Activated naive CD4-positive, alpha-beta T cell treated with anti-CD3 and anti-CD28 coated beads for 36 hours (primary cell): ENCODE measurements at regions of chr1 and their contacts with region 1.

Region 1: GRCh38 chr1:167599957-167600581 is 30.0 kb upstream of the RCSD1 start:
- DNase-seq: peak; percentile 71
- H3K4me3 Mint-ChIP-seq: peak overlapping the region; percentile 45
- H3K27ac Mint-ChIP-seq: peak overlapping the region; percentile 67
- H3K4me1 Mint-ChIP-seq: peaks cover 39% of the 10 kb centered on the region
- H3K27me3 Mint-ChIP-seq: no peaks in the 10 kb centered on the region

Region 2: GRCh38 chr1:167617153-167618147 is 17.4 kb after region 1 on chr1:
- CTCF ChIA-PET with region 1: interaction called, 16 read pairs
- intact Hi-C with region 1: loop called (anchors 1 kb)
- DNase-seq: peak; percentile 46
- H3K4me3 Mint-ChIP-seq: peak overlapping the region; percentile 70
- H3K27ac Mint-ChIP-seq: peak overlapping the region; percentile 90
- H3K4me1 Mint-ChIP-seq: peaks cover 48% of the 10 kb centered on the region
- H3K27me3 Mint-ChIP-seq: no peaks in the 10 kb centered on the region

Region 3: DNA sequence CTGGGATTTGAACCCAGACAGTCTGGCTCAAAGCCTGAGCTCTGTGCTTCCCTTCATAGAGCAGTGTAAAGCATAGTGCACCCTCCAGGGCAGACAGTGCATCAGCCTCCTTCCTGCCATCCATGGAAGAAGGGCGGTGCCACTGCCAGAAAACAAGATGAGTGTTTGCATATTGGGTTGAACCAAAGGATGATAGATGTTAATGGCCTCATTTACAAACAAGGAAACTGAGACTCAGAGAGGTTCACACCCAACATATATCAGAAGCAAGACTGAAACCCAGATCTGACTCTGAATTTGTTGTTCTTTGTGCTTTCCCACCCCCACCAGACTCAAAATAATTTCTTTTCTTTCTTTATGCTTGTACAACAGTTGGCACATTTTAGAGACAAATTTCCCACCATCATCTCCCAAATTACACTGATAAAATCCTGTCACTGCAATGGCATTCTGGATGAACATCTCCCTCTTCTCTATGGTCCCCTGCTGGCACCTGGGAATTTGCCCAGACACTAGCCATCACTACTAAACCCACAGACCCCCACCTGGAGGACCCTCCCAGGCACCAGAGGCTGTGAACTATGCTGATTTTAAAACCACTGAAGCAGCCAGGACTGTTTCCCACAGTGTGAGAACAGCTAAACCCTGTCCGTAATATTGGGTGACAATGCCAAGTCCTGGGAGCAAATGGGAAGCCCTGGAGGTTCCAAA is 76.3 kb after region 1 on chr1:
- CTCF ChIA-PET with region 1: interaction called, 19 read pairs
- intact Hi-C with region 1: loop called (anchors 1 kb)
- DNase-seq: peak; percentile 70
- H3K4me3 Mint-ChIP-seq: no peak overlapping the region
- H3K27ac Mint-ChIP-seq: peak overlapping the region; percentile 42
- H3K4me1 Mint-ChIP-seq: peaks cover 35% of the 10 kb centered on the region
- H3K27me3 Mint-ChIP-seq: no peaks in the 10 kb centered on the region

Region 4: DNA sequence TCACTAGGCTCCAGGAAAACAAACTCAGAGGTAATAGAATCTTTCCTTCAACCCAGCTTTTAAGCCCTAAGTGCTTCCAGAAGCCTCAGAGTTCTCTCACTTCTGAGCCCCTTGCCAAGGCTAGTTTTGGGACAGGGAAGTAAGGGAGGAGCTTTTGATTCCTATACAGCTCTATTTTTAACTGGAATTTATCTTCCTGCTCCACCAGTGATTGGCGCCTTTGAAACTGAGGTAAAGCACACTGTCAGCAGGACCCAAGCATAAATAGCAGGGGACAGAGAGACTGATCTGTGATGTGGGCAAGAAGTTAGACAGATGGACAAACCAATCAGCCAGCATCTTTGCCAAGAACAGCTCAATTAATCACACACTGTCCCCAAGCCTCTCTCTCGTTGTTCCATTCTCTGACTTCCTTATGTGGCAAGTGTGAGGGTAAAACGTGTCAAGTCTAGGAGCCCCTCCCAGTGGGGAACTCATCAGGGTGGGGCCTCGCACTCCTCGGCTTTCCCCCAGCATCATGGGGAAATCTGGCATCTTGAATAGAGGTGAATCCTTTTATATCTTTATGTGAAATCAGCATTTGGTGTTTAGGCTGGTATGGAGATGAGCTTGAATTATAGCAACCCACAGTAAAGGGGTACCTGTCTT is 81.5 kb after region 1 on chr1:
- CTCF ChIA-PET with region 1: interaction called, 148 read pairs
- intact Hi-C with region 1: loop called (anchors 1 kb)
- DNase-seq: peak; percentile 53
- H3K4me3 Mint-ChIP-seq: no peak overlapping the region
- H3K27ac Mint-ChIP-seq: peak overlapping the region; percentile 59
- H3K4me1 Mint-ChIP-seq: peaks cover 10% of the 10 kb centered on the region
- H3K27me3 Mint-ChIP-seq: no peaks in the 10 kb centered on the region

Region 5: GRCh38 chr1:167715157-167715999 is 115.3 kb after region 1 on chr1:
- CTCF ChIA-PET with region 1: interaction called, 18 read pairs
- intact Hi-C with region 1: loop called (anchors 1 kb)
- DNase-seq: peak; percentile 95
- H3K4me3 Mint-ChIP-seq: peak overlapping the region; percentile 79
- H3K27ac Mint-ChIP-seq: peak overlapping the region; percentile 92
- H3K4me1 Mint-ChIP-seq: peaks cover 28% of the 10 kb centered on the region
- H3K27me3 Mint-ChIP-seq: peaks cover 5% of the 10 kb centered on the region